ENCODE measurements at regions of chr9 and their contacts with region 1.

Region 1: GRCh38 chr9:107269681-107270080 is 13.4 kb upstream of the RAD23B start:
- DNase-seq: no peak
- ATAC-seq: no peak
- H3K4me3 ChIP-seq: no peak overlapping the region
- H3K27ac ChIP-seq: no peak overlapping the region
- H3K4me1 ChIP-seq: no peaks in the 10 kb centered on the region; the same call in 1 of the 2 replicates
- H3K27me3 ChIP-seq: no peaks in the 10 kb centered on the region
- CTCF ChIP-seq: no peak
- EP300 ChIP-seq: no peak
- POLR2A ChIP-seq: no peak
- RAD21 ChIP-seq: no peak

Region 2: DNA sequence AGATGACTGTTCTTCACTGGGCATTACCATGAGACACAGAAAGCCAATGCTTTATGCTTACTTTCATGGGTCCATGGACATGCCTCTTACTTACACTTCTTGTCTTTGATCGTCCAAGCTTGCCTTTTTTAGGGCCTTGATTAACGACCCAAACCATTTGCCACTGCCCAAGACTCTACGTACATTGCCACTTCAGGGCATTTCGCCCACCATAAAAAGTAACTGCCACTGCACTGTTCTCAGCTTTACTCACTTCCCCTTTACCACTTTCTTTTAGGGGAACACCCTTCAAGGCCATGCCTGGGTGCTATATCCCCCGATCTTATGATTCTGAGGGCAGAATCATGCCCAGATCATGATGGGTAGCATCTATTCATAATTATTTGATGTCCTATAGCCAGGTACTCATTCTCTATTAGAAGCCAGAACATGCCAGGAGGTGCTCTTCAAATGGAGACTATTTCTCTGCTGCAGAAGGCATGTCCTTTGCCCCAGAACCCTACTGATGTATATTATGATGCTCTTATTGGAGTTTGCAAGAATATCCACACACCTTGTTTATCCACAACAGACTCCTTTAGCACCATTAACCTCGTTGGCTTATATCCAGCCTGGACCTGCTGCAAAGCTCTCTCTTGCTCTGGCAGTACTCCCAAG is 50.7 kb before region 1 on chr9:
- CTCF ChIA-PET with region 1: interaction called, 3 read pairs
- POLR2A ChIA-PET with region 1: interaction called, 28 read pairs
- RAD21 ChIA-PET with region 1: interaction called, 6 read pairs
- SMC1A ChIA-PET with region 1: interaction called, 10 read pairs
- in situ Hi-C with region 1: no loop called
- intact Hi-C with region 1: no loop called
- DNase-seq: peak; percentile 53
- ATAC-seq: peak; percentile 85
- H3K4me3 ChIP-seq: no peak overlapping the region
- H3K27ac ChIP-seq: peak overlapping the region; percentile 31; the same call in 1 of the 2 replicates
- H3K4me1 ChIP-seq: peaks cover 14% of the 10 kb centered on the region; the same call in 1 of the 2 replicates
- H3K27me3 ChIP-seq: no peaks in the 10 kb centered on the region
- CTCF ChIP-seq: no peak
- EP300 ChIP-seq: peak; percentile 49 to 83; a peak in 3 of 4 replicates
- POLR2A ChIP-seq: no peak
- RAD21 ChIP-seq: no peak

Region 3: GRCh38 chr9:107351382-107352045 is 81.8 kb after region 1 on chr9:
- CTCF ChIA-PET with region 1: no interaction called
- POLR2A ChIA-PET with region 1: no interaction called
- RAD21 ChIA-PET with region 1: no interaction called
- SMC1A ChIA-PET with region 1: no interaction called
- in situ Hi-C with region 1: no loop called
- intact Hi-C with region 1: no loop called
- DNase-seq: no peak
- ATAC-seq: no peak
- H3K4me3 ChIP-seq: no peak overlapping the region
- H3K27ac ChIP-seq: no peak overlapping the region
- H3K4me1 ChIP-seq: no peaks in the 10 kb centered on the region
- H3K27me3 ChIP-seq: no peaks in the 10 kb centered on the region; a peak in 1 of 4 replicates
- CTCF ChIP-seq: no peak
- EP300 ChIP-seq: no peak
- POLR2A ChIP-seq: no peak
- RAD21 ChIP-seq: no peak

Region 4: DNA sequence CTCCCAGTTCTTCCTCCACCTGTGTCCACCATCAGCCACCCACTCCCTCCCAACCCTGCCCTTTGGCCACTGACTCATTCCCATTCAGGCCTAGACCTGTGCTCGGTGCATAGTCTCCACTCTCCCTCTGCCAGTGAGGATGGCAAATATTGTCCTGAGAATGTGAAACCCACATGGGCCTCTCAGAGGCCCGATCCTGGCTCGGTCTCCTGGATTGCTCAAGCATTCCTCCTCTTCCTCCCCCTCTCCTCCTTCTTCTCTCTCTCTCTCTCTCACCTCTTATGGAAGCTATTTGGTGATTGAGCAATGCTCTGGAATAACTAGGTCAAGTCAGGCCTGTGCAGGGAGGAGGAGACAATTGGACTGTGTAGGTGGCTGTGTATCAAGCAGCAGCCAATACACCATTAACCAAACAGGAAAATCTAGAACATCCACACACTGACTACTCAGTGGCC is 120.0 kb after region 1 on chr9:
- CTCF ChIA-PET with region 1: no interaction called
- POLR2A ChIA-PET with region 1: no interaction called
- RAD21 ChIA-PET with region 1: no interaction called
- SMC1A ChIA-PET with region 1: no interaction called
- in situ Hi-C with region 1: no loop called
- intact Hi-C with region 1: no loop called
- DNase-seq: no peak
- ATAC-seq: no peak
- H3K4me3 ChIP-seq: no peak overlapping the region
- H3K27ac ChIP-seq: no peak overlapping the region
- H3K4me1 ChIP-seq: no peaks in the 10 kb centered on the region
- H3K27me3 ChIP-seq: peaks cover 0 to 6% of the 10 kb centered on the region in 2 experiments; a peak in 2 of 4 replicates
- CTCF ChIP-seq: no peak
- EP300 ChIP-seq: no peak
- POLR2A ChIP-seq: no peak
- RAD21 ChIP-seq: no peak

Region 5: DNA sequence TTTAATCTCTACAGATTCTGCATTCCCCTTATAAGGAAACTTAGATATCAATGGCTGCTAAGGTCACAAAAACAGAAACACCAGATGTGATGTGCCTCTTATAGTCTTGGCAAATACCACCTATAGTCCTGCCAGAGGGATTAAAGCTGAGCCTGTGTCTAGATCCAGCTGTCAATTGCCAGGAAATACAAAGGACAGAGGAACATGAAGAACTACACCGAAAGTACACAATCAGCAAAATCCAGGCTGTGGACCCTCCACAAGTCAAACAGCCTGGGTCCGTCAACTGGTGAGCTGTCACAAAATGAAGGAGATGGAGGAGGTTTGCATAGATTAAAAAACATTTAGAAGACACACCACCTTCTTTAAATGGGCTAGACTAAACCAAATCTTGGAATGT is 134.5 kb after region 1 on chr9:
- CTCF ChIA-PET with region 1: no interaction called
- POLR2A ChIA-PET with region 1: no interaction called
- RAD21 ChIA-PET with region 1: no interaction called
- SMC1A ChIA-PET with region 1: no interaction called
- in situ Hi-C with region 1: no loop called
- intact Hi-C with region 1: no loop called
- DNase-seq: no peak
- ATAC-seq: no peak
- H3K4me3 ChIP-seq: no peak overlapping the region
- H3K27ac ChIP-seq: no peak overlapping the region
- H3K4me1 ChIP-seq: no peaks in the 10 kb centered on the region
- H3K27me3 ChIP-seq: no peaks in the 10 kb centered on the region; a peak in 1 of 4 replicates
- CTCF ChIP-seq: no peak
- EP300 ChIP-seq: no peak
- POLR2A ChIP-seq: no peak
- RAD21 ChIP-seq: no peak

Measured in GM12878 (cell line).